CD8-positive, alpha-beta T cell (primary cell): ENCODE measurements at regions of chr16 and their contacts with region 1.

Region 1: DNA sequence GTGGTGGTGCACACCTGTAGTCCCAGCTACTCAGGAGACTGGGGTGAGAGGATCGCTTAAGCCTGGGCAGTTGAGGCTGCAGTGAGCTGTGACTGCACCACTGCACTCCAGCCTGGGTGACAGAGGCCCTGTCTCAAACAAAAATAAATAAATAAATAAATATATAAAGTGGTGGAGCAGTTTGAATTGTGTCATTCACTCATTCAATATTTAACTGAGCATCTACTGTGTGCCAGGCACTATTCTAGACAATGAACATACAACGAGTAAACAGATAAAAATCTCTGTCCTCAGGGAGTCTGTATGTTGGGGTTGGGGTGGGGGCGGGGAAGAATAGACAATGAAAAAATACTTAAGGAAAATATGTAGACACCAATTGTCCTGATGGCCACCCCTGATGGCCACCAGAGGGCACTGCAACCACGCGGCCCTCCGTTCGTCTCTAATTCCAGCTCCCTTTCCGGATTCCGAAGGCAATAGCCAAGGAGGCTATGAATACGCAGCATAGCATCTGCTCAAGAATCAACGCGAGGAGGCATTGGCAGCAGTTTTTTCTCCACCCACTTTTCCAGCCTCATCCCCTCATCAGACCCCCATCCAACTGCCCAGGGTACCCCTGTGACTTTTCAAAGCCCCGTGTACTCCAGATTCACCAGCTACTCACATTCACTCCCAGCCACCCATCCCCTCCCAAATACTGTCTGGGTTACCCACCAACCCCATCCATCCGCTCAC is 21.4 kb downstream of the QPRT start:
- DNase-seq: peak; percentile 55 to 89 (median 75)
- ATAC-seq: no peak
- H3K4me3 ChIP-seq: no peak overlapping the region
- H3K4me3 Mint-ChIP-seq: peak overlapping the region; percentile 52
- H3K27ac ChIP-seq: peak overlapping the region in 1 of 2 experiments; percentile 86
- H3K27ac Mint-ChIP-seq: peak overlapping the region; percentile 92
- H3K4me1 ChIP-seq: peaks cover 32% of the 10 kb centered on the region
- H3K4me1 Mint-ChIP-seq: peaks cover 37% of the 10 kb centered on the region
- H3K27me3 ChIP-seq: no peaks in the 10 kb centered on the region
- H3K27me3 Mint-ChIP-seq: no peaks in the 10 kb centered on the region
- CTCF ChIP-seq: peak; percentile 90

Region 2: GRCh38 chr16:29687760-29688159 is 12.7 kb before region 1 on chr16:
- CTCF ChIA-PET with region 1: interaction called, 31 read pairs
- POLR2A ChIA-PET with region 1: interaction called, 4 read pairs
- intact Hi-C with region 1: no loop called
- DNase-seq: no peak
- ATAC-seq: no peak
- H3K4me3 ChIP-seq: no peak overlapping the region
- H3K4me3 Mint-ChIP-seq: no peak overlapping the region
- H3K27ac ChIP-seq: no peak overlapping the region
- H3K27ac Mint-ChIP-seq: no peak overlapping the region
- H3K4me1 ChIP-seq: peaks cover 5% of the 10 kb centered on the region
- H3K4me1 Mint-ChIP-seq: peaks cover 11% of the 10 kb centered on the region
- H3K27me3 ChIP-seq: no peaks in the 10 kb centered on the region
- H3K27me3 Mint-ChIP-seq: no peaks in the 10 kb centered on the region
- CTCF ChIP-seq: no peak

Region 3: DNA sequence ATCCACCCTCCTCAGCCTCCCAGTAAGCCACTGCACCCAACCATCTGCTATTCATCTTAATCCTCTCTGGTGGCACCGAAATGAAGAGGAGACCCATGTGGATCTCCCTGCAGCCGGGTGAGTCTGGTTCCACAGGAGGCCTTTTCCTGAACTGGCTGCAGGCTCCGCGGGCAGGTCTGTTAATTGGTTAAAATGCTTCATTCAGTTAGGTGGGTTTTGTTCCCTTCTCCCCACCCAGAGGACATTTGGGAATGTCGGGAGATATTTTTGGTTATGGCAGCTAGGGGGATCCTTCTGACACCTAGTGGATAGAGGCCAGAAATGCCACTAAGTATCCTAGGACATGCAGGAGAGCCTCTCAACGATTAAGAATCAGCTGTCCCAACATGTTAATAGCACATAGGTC is 28.7 kb after region 1 on chr16:
- CTCF ChIA-PET with region 1: interaction called, 89 read pairs
- POLR2A ChIA-PET with region 1: interaction called, 5 read pairs
- intact Hi-C with region 1: no loop called
- DNase-seq: peak in 1 of 9 experiments; percentile 39
- ATAC-seq: no peak
- H3K4me3 ChIP-seq: no peak overlapping the region
- H3K4me3 Mint-ChIP-seq: no peak overlapping the region
- H3K27ac ChIP-seq: no peak overlapping the region
- H3K27ac Mint-ChIP-seq: no peak overlapping the region
- H3K4me1 ChIP-seq: peaks cover 11% of the 10 kb centered on the region
- H3K4me1 Mint-ChIP-seq: peaks cover 23% of the 10 kb centered on the region
- H3K27me3 ChIP-seq: no peaks in the 10 kb centered on the region
- H3K27me3 Mint-ChIP-seq: no peaks in the 10 kb centered on the region
- CTCF ChIP-seq: peak; percentile 24

Region 4: GRCh38 chr16:29790183-29790952 is 89.9 kb after region 1 on chr16 and contains the start of gene KIF22:
- CTCF ChIA-PET with region 1: interaction called, 112 read pairs
- POLR2A ChIA-PET with region 1: interaction called, 54 read pairs
- intact Hi-C with region 1: loop called (anchors 1 to 2 kb)
- DNase-seq: peak; percentile 99 to 100 (median 100)
- ATAC-seq: peak; percentile 95
- H3K4me3 ChIP-seq: peak within 1 kb of the TSS; percentile 81 to 94
- H3K4me3 Mint-ChIP-seq: peak within 1 kb of the TSS; percentile 99
- H3K27ac ChIP-seq: peak within 1 kb of the TSS; percentile 78 to 80
- H3K27ac Mint-ChIP-seq: peak within 1 kb of the TSS; percentile 95
- H3K4me1 ChIP-seq: peaks cover 30% of the 10 kb centered on the region
- H3K4me1 Mint-ChIP-seq: peaks cover 41% of the 10 kb centered on the region
- H3K27me3 ChIP-seq: no peaks in the 10 kb centered on the region
- H3K27me3 Mint-ChIP-seq: no peaks in the 10 kb centered on the region
- CTCF ChIP-seq: peak; percentile 67
- total RNA-seq, gene KIF22: 93.5 to 105 TPM

Region 5: GRCh38 chr16:29842732-29843346 is 142.4 kb after region 1 on chr16:
- CTCF ChIA-PET with region 1: interaction called, 113 read pairs
- POLR2A ChIA-PET with region 1: interaction called, 10 read pairs
- intact Hi-C with region 1: loop called (anchors 1 kb)
- DNase-seq: no peak
- ATAC-seq: no peak
- H3K4me3 ChIP-seq: no peak overlapping the region
- H3K4me3 Mint-ChIP-seq: no peak overlapping the region
- H3K27ac ChIP-seq: no peak overlapping the region
- H3K27ac Mint-ChIP-seq: no peak overlapping the region
- H3K4me1 ChIP-seq: no peaks in the 10 kb centered on the region
- H3K4me1 Mint-ChIP-seq: peaks cover 3% of the 10 kb centered on the region
- H3K27me3 ChIP-seq: no peaks in the 10 kb centered on the region
- H3K27me3 Mint-ChIP-seq: no peaks in the 10 kb centered on the region
- CTCF ChIP-seq: no peak

Region 6: GRCh38 chr16:30005341-30006094 is 305.1 kb after region 1 on chr16:
- CTCF ChIA-PET with region 1: interaction called, 15 read pairs
- POLR2A ChIA-PET with region 1: no interaction called
- intact Hi-C with region 1: no loop called
- DNase-seq: peak in 7 of 9 experiments; percentile 17 to 66 (median 55)
- ATAC-seq: peak; percentile 87
- H3K4me3 ChIP-seq: no peak overlapping the region
- H3K4me3 Mint-ChIP-seq: no peak overlapping the region
- H3K27ac ChIP-seq: no peak overlapping the region
- H3K27ac Mint-ChIP-seq: no peak overlapping the region
- H3K4me1 ChIP-seq: peaks cover 5% of the 10 kb centered on the region
- H3K4me1 Mint-ChIP-seq: peaks cover 6% of the 10 kb centered on the region
- H3K27me3 ChIP-seq: peaks cover 0 to 11% of the 10 kb centered on the region in 2 experiments
- H3K27me3 Mint-ChIP-seq: peaks cover 13% of the 10 kb centered on the region
- CTCF ChIP-seq: peak; percentile 71

Region 7: DNA sequence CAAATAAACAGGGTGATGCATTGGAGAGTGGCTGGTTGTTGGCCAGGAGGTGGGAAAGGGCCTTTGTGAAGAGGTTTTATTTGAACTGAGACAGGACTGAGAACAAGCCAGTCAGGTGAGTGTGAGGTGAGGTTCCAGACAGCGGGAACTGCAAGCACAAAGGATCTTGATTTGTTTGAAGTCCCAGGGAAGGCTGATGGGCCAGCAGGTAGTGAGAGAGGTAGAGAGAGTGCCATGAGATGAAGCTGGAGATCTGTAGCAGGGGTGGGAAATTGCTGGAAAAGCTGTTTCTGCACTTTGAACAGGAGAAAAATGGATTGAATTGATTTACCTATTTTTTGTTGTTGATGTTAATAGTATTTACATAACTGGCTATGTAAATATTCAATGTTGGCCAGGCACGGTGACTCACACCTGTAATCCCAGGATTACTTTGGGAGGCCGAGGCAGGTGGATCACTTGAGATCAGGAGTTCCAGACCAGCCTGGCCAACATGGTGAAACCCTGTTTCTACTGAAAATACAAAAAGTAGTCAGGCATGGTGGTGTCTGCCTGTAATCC is 737.1 kb after region 1 on chr16:
- CTCF ChIA-PET with region 1: no interaction called
- POLR2A ChIA-PET with region 1: no interaction called
- intact Hi-C with region 1: no loop called
- DNase-seq: no peak
- ATAC-seq: no peak
- H3K4me3 ChIP-seq: no peak overlapping the region
- H3K4me3 Mint-ChIP-seq: no peak overlapping the region
- H3K27ac ChIP-seq: no peak overlapping the region
- H3K27ac Mint-ChIP-seq: no peak overlapping the region
- H3K4me1 ChIP-seq: no peaks in the 10 kb centered on the region
- H3K4me1 Mint-ChIP-seq: peaks cover 13% of the 10 kb centered on the region
- H3K27me3 ChIP-seq: no peaks in the 10 kb centered on the region
- H3K27me3 Mint-ChIP-seq: no peaks in the 10 kb centered on the region
- CTCF ChIP-seq: no peak